Activated CD4-positive, alpha-beta T cell treated with anti-CD3 and anti-CD28 coated beads for 36 hours (primary cell): ENCODE measurements at regions of chr3 and their contacts with region 1.

Region 1: GRCh38 chr3:58630076-58630709 is 36.4 kb downstream of the FAM3D start:
- DNase-seq: peak; percentile 77
- ATAC-seq: peak; percentile 66
- H3K4me3 Mint-ChIP-seq: no peak overlapping the region
- H3K27ac Mint-ChIP-seq: no peak overlapping the region
- H3K4me1 Mint-ChIP-seq: no peaks in the 10 kb centered on the region
- H3K27me3 Mint-ChIP-seq: peaks cover 5% of the 10 kb centered on the region

Region 2: DNA sequence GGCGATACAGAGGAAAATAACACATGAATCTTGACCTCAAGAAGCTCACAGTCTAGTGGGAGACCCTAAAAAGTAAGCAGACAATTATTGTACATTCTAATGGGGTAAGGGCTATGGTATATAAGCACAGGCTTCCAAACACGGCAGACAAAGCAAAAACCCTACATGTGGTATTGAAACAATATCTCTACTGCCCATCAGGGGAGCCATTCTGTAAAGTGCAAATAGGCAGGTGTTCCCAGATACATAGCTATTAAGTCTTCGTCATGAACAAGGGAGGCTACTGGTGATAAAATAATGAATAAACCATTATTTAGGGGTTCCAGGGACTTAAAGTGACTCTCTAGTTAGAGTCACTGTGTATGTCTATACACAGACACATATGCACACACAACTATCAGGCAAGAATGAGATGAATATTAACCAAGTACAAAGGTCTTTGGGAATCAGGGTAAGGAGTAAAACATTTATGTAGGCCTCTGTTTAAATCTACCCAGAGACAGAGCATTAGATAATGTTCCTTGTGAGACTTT is 1299.0 kb before region 1 on chr3:
- CTCF ChIA-PET with region 1: no interaction called
- POLR2A ChIA-PET with region 1: no interaction called
- intact Hi-C with region 1: no loop called
- DNase-seq: no peak
- ATAC-seq: no peak
- H3K4me3 Mint-ChIP-seq: no peak overlapping the region
- H3K27ac Mint-ChIP-seq: no peak overlapping the region
- H3K4me1 Mint-ChIP-seq: no peaks in the 10 kb centered on the region
- H3K27me3 Mint-ChIP-seq: peaks cover 9% of the 10 kb centered on the region

Region 3: GRCh38 chr3:58177747-58178527 is 452.3 kb before region 1 on chr3:
- CTCF ChIA-PET with region 1: interaction called, 5 read pairs
- POLR2A ChIA-PET with region 1: no interaction called
- intact Hi-C with region 1: loop called in 1 of 2 experiments (anchors 5 kb)
- DNase-seq: peak; percentile 95
- ATAC-seq: peak; percentile 86
- H3K4me3 Mint-ChIP-seq: peak overlapping the region; percentile 61
- H3K27ac Mint-ChIP-seq: peak overlapping the region; percentile 31
- H3K4me1 Mint-ChIP-seq: peaks cover 13% of the 10 kb centered on the region
- H3K27me3 Mint-ChIP-seq: peaks cover 4% of the 10 kb centered on the region

Region 4: DNA sequence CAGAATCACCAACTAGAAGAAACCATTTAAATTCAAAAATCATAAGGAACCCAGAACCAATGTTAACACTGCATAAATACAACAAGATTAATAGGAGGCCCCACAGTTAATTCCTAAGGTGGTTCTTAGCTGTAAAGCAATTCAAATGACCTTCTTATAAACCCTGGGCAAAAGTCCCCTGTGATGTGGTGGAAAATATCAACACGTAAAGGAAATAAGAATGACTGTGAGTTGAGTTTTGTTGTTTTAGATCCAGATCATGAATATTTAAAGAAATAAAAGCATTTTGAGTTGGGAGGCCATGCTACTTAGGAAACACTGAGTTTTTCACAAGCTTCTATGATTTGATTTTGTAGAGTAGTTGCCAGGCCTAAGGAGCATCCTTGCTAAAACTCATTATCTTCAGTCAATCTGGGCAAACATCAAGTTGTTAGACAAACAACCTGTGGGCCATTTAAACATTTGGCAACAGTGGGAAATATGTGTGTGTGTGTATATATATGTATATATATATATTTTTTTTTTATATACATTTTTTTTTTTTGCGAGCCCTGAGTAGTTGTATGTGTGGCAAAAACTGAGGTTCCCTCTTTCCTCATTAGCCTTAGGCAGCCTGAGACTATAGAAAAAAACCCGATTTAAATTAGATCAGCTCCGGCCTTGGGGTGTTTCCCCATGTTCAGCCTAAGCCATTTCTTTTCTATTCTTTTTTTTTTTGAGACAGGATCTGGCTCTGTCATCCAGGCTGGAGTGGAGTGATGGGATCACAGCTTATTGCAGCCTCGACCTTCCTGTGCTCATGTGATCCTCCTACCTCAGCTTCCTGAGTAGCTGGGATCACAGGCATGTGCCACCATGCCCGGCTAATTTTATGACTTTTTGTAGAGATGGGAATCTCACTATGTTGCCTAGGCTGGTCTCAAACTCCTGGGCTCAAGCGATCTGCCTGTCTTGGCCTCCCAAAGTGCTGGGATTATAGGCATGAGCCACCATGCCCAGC is 305.5 kb before region 1 on chr3:
- CTCF ChIA-PET with region 1: no interaction called
- POLR2A ChIA-PET with region 1: no interaction called
- intact Hi-C with region 1: loop called in 1 of 2 experiments (anchors 1 kb)
- DNase-seq: no peak
- ATAC-seq: peak; percentile 62
- H3K4me3 Mint-ChIP-seq: peak overlapping the region; percentile 29
- H3K27ac Mint-ChIP-seq: peak overlapping the region; percentile 86
- H3K4me1 Mint-ChIP-seq: peaks cover 40% of the 10 kb centered on the region
- H3K27me3 Mint-ChIP-seq: no peaks in the 10 kb centered on the region

Region 5: DNA sequence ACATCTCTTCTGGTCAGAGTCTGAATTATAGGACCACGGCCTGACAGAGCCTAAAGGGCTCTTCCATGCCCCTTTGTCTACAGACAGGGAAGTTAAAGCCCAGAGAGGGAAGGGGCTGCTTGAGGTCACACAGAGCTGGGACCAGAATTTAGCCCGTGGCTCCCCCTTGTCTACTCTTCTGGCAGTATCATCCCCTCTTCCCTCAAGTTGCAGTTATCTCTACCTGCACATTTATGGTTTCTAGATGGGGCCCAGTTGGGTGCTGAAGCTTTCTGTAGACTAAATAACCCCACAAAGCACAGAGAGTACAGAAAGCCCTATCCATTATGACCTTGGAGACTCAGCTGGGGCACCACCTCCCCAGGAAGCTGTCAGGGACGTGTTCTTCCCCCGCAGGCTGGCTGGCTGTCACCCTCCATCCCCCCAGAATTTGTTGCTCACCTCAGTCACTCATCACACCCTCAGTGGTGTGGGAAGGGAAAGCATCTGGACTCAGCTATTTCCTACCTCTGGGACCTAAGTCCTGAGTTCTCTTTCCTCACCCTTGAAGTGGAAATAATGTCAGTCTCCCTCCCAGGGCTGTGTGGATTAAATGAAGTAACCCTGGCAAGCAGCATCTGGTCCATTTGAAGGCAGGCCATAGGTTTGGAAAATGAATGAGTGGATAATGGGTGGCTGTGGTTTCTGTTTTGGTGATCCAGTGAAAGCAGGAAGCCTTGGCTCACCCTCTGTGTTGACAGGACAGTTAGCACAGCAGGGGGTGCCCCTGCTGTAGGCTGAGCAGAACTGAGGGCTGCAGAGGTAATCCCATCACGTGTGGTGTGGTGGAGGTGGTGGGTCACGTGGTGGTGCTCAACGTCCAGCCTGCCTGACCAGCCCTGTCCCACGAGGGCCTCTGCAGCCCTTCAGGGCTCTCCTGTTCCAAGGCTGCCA is 109.5 kb before region 1 on chr3:
- CTCF ChIA-PET with region 1: no interaction called
- POLR2A ChIA-PET with region 1: no interaction called
- intact Hi-C with region 1: no loop called
- DNase-seq: no peak
- ATAC-seq: no peak
- H3K4me3 Mint-ChIP-seq: no peak overlapping the region
- H3K27ac Mint-ChIP-seq: no peak overlapping the region
- H3K4me1 Mint-ChIP-seq: no peaks in the 10 kb centered on the region
- H3K27me3 Mint-ChIP-seq: no peaks in the 10 kb centered on the region

Region 6: DNA sequence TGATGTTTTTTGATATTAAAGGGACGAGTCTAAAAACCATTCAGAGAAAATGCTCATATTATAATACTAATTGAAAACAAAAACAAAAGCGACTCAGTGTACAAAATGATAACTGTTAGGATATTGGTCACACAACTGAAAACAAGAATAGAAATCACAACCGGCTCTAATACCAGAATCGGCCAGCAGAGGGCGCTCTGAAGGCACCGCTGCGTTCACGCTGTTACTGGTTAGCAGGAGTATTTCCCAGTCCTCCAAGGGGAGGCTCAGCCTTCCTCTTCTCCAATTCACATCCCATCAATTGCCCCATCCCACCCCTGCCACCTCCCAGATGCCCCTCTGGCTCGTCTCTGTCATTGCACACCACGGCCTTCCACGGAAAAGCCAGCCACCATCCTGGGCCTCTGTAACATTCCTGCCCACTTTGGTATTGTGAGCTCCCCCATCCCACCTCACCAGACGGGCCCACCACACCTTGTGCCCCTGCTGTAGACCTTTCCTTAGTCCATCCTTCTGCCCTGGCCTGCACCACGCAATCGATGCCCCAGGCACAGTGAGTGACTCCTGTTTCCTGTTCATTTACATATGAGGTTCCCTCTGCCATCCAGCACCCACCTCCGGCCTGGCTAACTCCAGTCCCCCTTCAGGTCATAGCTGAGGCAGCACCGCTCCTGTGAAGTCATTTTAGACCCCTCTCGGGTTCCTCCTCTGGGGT is 61.5 kb before region 1 on chr3:
- CTCF ChIA-PET with region 1: interaction called, 94 read pairs
- POLR2A ChIA-PET with region 1: interaction called, 4 read pairs
- intact Hi-C with region 1: loop called (anchors 1 kb)
- DNase-seq: peak; percentile 87
- ATAC-seq: peak; percentile 70
- H3K4me3 Mint-ChIP-seq: no peak overlapping the region
- H3K27ac Mint-ChIP-seq: no peak overlapping the region
- H3K4me1 Mint-ChIP-seq: peaks cover 4% of the 10 kb centered on the region
- H3K27me3 Mint-ChIP-seq: no peaks in the 10 kb centered on the region

Region 7: GRCh38 chr3:58585005-58585786 is 45.0 kb before region 1 on chr3:
- CTCF ChIA-PET with region 1: interaction called, 15 read pairs
- POLR2A ChIA-PET with region 1: no interaction called
- intact Hi-C with region 1: no loop called
- DNase-seq: peak; percentile 81
- ATAC-seq: peak; percentile 94
- H3K4me3 Mint-ChIP-seq: peak overlapping the region; percentile 73
- H3K27ac Mint-ChIP-seq: peak overlapping the region; percentile 61
- H3K4me1 Mint-ChIP-seq: peaks cover 19% of the 10 kb centered on the region
- H3K27me3 Mint-ChIP-seq: peaks cover 50% of the 10 kb centered on the region

Region 8: GRCh38 chr3:58792921-58793451 is 162.8 kb after region 1 on chr3:
- CTCF ChIA-PET with region 1: no interaction called
- POLR2A ChIA-PET with region 1: no interaction called
- intact Hi-C with region 1: no loop called
- DNase-seq: no peak
- ATAC-seq: no peak
- H3K4me3 Mint-ChIP-seq: no peak overlapping the region
- H3K27ac Mint-ChIP-seq: no peak overlapping the region
- H3K4me1 Mint-ChIP-seq: no peaks in the 10 kb centered on the region
- H3K27me3 Mint-ChIP-seq: peaks cover 2% of the 10 kb centered on the region